WTC11 (cell line): ENCODE measurements at regions of chr1 and their contacts with region 1.

Region 1: DNA sequence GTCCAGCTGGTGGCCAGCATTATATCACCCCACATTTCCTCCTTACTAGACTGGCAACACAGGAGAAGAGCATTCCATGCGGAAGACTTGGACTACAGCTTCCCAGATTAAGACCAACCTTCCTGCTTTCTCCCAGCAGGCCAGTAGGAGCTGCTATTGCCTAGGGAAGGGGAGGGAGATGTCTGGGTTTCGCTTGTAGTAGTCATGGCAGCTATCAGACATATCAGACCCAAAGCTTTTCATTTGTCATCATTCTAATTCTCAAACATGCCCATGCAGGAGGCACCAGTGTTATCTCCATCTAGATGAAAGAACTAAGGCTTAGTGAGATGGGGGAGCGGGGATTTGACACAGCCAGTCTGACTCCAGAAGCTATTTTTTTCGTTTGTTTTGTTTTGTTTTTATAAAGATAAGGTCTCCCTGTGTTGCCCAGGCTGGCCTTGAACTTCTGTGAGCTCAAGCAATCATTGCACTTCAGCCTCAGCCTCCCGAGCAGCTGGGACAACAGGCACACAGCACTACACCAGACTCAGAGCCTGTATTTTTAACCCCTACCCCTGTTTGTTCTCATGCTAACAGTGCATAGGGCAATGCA is 4.5 kb downstream of the PLA2G2A start:
- DNase-seq: peak; percentile 66
- ATAC-seq: peak; percentile 93
- H3K4me3 Mint-ChIP-seq: no peak overlapping the region
- H3K27ac Mint-ChIP-seq: no peak overlapping the region
- H3K4me1 Mint-ChIP-seq: peaks cover 28% of the 10 kb centered on the region
- H3K27me3 Mint-ChIP-seq: no peaks in the 10 kb centered on the region; the same call in 1 of the 2 replicates
- CTCF ChIP-seq: peak; percentile 47; the same call in 1 of the 2 replicates

Region 2: DNA sequence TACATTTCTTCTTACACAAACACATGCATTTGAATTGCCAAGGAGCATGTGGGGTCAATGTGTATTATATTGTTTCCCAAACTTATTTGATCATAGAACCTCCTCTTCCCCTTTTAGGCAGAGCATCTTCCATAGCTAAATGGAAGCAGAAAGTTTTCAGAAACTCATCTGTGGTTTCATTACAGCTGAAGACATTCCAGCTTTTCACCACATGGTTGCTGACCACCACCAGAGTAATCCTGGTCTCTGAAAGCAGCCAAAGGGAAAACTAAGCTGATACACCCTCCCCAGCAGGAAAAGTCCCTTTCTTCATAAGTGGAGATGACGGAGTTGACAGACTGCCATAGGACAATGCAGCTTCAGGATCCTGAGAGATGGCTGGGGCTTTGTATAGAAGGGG is 122.9 kb before region 1 on chr1:
- CTCF ChIA-PET with region 1: no interaction called
- POLR2A ChIA-PET with region 1: no interaction called
- DNase-seq: no peak
- ATAC-seq: no peak
- H3K4me3 Mint-ChIP-seq: no peak overlapping the region
- H3K27ac Mint-ChIP-seq: no peak overlapping the region
- H3K4me1 Mint-ChIP-seq: 0 out of 2 replicates have a peak, but pooled peaks cover 7% of the 10 kb centered on the region
- H3K27me3 Mint-ChIP-seq: peaks cover 25% of the 10 kb centered on the region
- CTCF ChIP-seq: no peak

Region 3: GRCh38 chr1:19918057-19918456 is 56.9 kb before region 1 on chr1:
- CTCF ChIA-PET with region 1: interaction called, 19 read pairs
- POLR2A ChIA-PET with region 1: no interaction called
- DNase-seq: peak; percentile 88
- ATAC-seq: peak; percentile 70
- H3K4me3 Mint-ChIP-seq: no peak overlapping the region
- H3K27ac Mint-ChIP-seq: no peak overlapping the region
- H3K4me1 Mint-ChIP-seq: peaks cover 9% of the 10 kb centered on the region; the same call in 1 of the 2 replicates
- H3K27me3 Mint-ChIP-seq: no peaks in the 10 kb centered on the region; the same call in 1 of the 2 replicates
- CTCF ChIP-seq: peak; percentile 79

Region 4: DNA sequence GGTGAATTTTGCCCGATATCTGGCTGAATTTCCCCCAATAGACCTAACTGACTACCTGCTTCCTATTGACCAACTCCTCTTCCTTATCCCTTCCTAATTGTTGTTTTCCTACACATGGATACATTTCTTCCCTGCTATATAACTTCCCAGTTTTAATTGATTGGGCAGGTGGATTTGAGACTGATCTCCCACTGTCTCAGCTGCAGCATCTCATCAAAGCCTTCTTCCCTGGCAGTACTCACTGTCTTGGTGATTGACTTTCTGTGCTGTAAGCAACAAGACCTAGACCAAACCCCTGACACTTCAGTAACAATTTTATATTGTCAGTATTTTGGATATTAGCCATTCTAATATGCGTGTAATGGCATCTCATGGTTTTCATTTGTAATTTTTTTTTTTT is 15.8 kb after region 1 on chr1:
- CTCF ChIA-PET with region 1: interaction called, 10 read pairs
- POLR2A ChIA-PET with region 1: no interaction called
- DNase-seq: no peak
- ATAC-seq: peak; percentile 75
- H3K4me3 Mint-ChIP-seq: peak overlapping the region; percentile 61
- H3K27ac Mint-ChIP-seq: peak overlapping the region; percentile 99
- H3K4me1 Mint-ChIP-seq: peaks cover 73% of the 10 kb centered on the region
- H3K27me3 Mint-ChIP-seq: peaks cover 3% of the 10 kb centered on the region
- CTCF ChIP-seq: no peak

Region 5: GRCh38 chr1:20100632-20101355 is 125.9 kb after region 1 on chr1:
- CTCF ChIA-PET with region 1: interaction called, 11 read pairs
- POLR2A ChIA-PET with region 1: no interaction called
- DNase-seq: peak; percentile 75
- ATAC-seq: peak; percentile 99
- H3K4me3 Mint-ChIP-seq: no peak overlapping the region
- H3K27ac Mint-ChIP-seq: peak overlapping the region; percentile 78; the same call in 1 of the 2 replicates
- H3K4me1 Mint-ChIP-seq: peaks cover 3% of the 10 kb centered on the region
- H3K27me3 Mint-ChIP-seq: peaks cover 17% of the 10 kb centered on the region
- CTCF ChIP-seq: peak; percentile 62

Region 6: GRCh38 chr1:20115479-20115878 is 140.6 kb after region 1 on chr1:
- CTCF ChIA-PET with region 1: interaction called, 17 read pairs
- POLR2A ChIA-PET with region 1: no interaction called
- DNase-seq: peak; percentile 35
- ATAC-seq: peak; percentile 58
- H3K4me3 Mint-ChIP-seq: no peak overlapping the region
- H3K27ac Mint-ChIP-seq: no peak overlapping the region
- H3K4me1 Mint-ChIP-seq: peaks cover 16% of the 10 kb centered on the region
- H3K27me3 Mint-ChIP-seq: no peaks in the 10 kb centered on the region
- CTCF ChIP-seq: no peak